Esophagus squamous epithelium (tissue), 5 donors: ENCODE measurements at regions of chr1 and their contacts with region 1.

Region 1: GRCh38 chr1:84936116-84936810 is 43.3 kb upstream of the LPAR3 start:
- DNase-seq: no peak
- H3K4me3 ChIP-seq: no peak overlapping the region
- H3K27ac ChIP-seq: no peak overlapping the region
- H3K4me1 ChIP-seq: peaks cover 0 to 9% (median 0%) of the 10 kb centered on the region in 3 donors
- H3K27me3 ChIP-seq: no peaks in the 10 kb centered on the region
- CTCF ChIP-seq: peak; percentile 73 to 94 (median 86)
- POLR2A ChIP-seq: no peak

Region 2: DNA sequence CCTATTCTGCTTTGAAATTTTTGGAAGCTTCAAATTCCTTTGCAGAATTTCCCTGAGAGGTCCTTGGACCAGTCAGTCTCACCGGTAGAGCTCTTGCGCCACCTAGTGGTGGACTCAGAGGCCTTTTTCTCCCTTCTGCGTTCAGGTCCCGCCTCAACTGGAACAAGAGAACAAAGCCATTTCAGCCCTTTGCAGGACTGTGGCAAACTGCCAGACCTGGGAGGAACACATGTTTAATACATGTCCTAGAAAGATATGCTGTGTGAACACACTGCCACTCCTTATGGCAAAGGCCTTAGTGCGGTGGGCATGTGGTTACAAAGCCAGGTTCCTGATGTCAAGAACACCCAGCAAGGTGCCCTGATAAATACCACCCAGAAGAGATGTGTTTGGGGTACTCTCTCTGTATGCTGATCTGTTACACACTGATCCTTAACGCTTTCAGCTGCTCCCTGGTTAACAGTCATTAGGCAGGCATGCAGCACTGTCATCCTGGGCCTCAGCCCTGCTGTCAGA is 163.8 kb before region 1 on chr1:
- intact Hi-C with region 1: loop called (anchors 10 kb)
- DNase-seq: no peak
- H3K4me3 ChIP-seq: no peak overlapping the region
- H3K27ac ChIP-seq: peak overlapping the region in 1 of 4 donors; percentile 42
- H3K4me1 ChIP-seq: peaks cover 0 to 31% (median 20%) of the 10 kb centered on the region in 3 donors
- H3K27me3 ChIP-seq: peaks cover 0 to 16% (median 0%) of the 10 kb centered on the region in 4 donors
- CTCF ChIP-seq: peak; percentile 63 to 94 (median 90)
- POLR2A ChIP-seq: no peak

Region 3: GRCh38 chr1:85033221-85033620 is 97.0 kb after region 1 on chr1:
- intact Hi-C with region 1: no loop called
- DNase-seq: no peak
- H3K4me3 ChIP-seq: no peak overlapping the region
- H3K27ac ChIP-seq: no peak overlapping the region
- H3K4me1 ChIP-seq: no peaks in the 10 kb centered on the region
- H3K27me3 ChIP-seq: no peaks in the 10 kb centered on the region
- CTCF ChIP-seq: no peak
- POLR2A ChIP-seq: no peak